ENCODE measurements at regions of chr10 and their contacts with region 1.

Region 1: GRCh38 chr10:93999401-93999851 is 5.7 kb downstream of the PLCE1 start:
- DNase-seq: peak; percentile 66 to 75
- ATAC-seq: no peak
- H3K4me3 ChIP-seq: no peak overlapping the region
- H3K27ac ChIP-seq: peak overlapping the region; percentile 14
- H3K4me1 ChIP-seq: peaks cover 39% of the 10 kb centered on the region
- H3K27me3 ChIP-seq: no peaks in the 10 kb centered on the region
- CTCF ChIP-seq: no peak

Region 2: DNA sequence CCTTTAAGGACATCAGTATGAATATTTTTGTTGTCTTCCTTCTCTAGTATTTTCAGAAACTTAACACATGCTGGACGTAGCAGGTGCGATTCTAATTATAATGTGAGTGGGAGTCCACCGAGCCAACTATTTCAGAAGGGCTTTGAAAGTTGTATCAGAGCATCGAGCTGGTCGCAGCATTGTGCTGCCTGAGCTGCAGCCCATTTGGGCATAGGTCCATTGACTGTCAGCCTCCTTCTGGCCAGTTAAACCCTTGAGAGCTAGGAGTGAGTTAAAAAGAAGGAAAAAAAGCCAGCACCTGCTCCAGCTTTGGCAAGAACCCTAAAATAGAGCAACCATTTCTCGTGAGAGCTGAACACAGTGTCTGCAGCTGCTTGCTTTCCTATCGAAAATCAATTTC is 57.8 kb before region 1 on chr10:
- intact Hi-C with region 1: loop called in 1 of 2 experiments (anchors 5 kb)
- DNase-seq: no peak
- ATAC-seq: peak; percentile 80 to 92 (median 92)
- H3K4me3 ChIP-seq: peak overlapping the region; percentile 19
- H3K27ac ChIP-seq: peak overlapping the region; percentile 73
- H3K4me1 ChIP-seq: peaks cover 35% of the 10 kb centered on the region
- H3K27me3 ChIP-seq: no peaks in the 10 kb centered on the region
- CTCF ChIP-seq: no peak

Region 3: DNA sequence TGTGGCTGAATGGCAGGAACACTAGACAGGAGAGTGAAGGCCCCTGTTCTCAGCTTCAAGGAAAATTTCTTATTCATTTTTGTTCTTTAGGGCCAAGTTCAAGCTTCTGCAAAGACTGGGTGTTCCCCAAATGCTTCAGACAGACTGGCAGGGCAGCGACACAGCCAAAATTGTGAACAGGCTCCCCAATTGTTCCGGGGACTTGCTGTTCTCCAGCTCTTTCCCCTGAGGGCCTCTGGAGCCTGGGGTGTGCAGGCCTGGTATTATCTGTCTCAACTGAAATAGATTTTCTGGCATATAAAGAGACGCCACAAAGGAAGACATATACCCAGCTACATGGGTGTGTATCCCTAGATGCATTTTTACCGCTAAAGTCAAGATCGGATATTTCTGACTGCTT is 36.0 kb before region 1 on chr10:
- intact Hi-C with region 1: loop called in 1 of 2 experiments (anchors 5 kb)
- DNase-seq: no peak
- ATAC-seq: no peak
- H3K4me3 ChIP-seq: no peak overlapping the region
- H3K27ac ChIP-seq: no peak overlapping the region
- H3K4me1 ChIP-seq: peaks cover 10% of the 10 kb centered on the region
- H3K27me3 ChIP-seq: no peaks in the 10 kb centered on the region
- CTCF ChIP-seq: no peak

Region 4: GRCh38 chr10:94133239-94133638 is 133.8 kb after region 1 on chr10:
- intact Hi-C with region 1: loop called in 1 of 2 experiments (anchors 5 kb)
- DNase-seq: peak; percentile 61 to 87
- ATAC-seq: peak; percentile 93 to 99 (median 96)
- H3K4me3 ChIP-seq: no peak overlapping the region
- H3K27ac ChIP-seq: peak overlapping the region; percentile 5
- H3K4me1 ChIP-seq: peaks cover 21% of the 10 kb centered on the region
- H3K27me3 ChIP-seq: no peaks in the 10 kb centered on the region
- CTCF ChIP-seq: no peak

Region 5: GRCh38 chr10:94225589-94225988 is 226.2 kb after region 1 on chr10:
- intact Hi-C with region 1: no loop called
- DNase-seq: no peak
- ATAC-seq: peak in 3 of 4 donors; percentile 23 to 56 (median 39)
- H3K4me3 ChIP-seq: no peak overlapping the region
- H3K27ac ChIP-seq: no peak overlapping the region
- H3K4me1 ChIP-seq: peaks cover 4% of the 10 kb centered on the region
- H3K27me3 ChIP-seq: no peaks in the 10 kb centered on the region
- CTCF ChIP-seq: peak; percentile 14